ENCODE measurements at regions of chr15 and their contacts with region 1.

Region 1: DNA sequence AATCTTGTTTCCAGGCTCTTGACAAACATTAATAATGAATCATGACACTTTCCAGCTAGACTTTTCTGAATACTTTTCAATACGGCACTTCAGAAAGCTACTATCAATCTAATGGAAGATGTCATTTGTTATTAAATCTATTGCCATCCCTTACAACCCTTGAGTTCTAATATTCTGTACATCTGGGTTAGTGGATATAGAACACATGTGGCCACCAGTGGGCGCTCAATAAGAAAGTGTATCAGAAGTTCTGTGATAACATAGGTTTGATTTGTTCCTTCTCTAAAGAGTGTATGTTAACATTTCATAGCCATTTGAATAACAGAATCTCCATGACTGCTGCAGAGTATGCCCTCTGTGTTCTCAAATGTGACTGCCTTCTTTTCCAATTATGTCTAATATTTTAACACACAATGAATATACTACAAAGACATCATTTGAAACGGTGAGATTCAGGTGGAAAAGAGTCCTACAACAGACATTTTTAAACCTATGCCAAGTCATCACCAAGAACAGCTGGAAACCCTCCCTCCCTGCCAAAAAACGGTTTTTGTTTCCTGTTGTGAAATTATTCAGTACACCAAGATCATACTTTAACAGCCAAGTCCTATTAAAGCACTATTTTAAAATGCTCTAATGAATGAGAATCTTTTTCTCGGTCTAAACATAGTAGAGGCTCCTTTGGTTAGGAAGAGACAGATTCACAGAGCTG is 22.2 kb downstream of the ALDH1A2 start:
- DNase-seq: peak; percentile 74
- H3K4me3 Mint-ChIP-seq: no peak overlapping the region
- H3K27ac Mint-ChIP-seq: no peak overlapping the region
- H3K4me1 Mint-ChIP-seq: no peaks in the 10 kb centered on the region
- H3K27me3 Mint-ChIP-seq: peaks cover 30% of the 10 kb centered on the region

Region 2: DNA sequence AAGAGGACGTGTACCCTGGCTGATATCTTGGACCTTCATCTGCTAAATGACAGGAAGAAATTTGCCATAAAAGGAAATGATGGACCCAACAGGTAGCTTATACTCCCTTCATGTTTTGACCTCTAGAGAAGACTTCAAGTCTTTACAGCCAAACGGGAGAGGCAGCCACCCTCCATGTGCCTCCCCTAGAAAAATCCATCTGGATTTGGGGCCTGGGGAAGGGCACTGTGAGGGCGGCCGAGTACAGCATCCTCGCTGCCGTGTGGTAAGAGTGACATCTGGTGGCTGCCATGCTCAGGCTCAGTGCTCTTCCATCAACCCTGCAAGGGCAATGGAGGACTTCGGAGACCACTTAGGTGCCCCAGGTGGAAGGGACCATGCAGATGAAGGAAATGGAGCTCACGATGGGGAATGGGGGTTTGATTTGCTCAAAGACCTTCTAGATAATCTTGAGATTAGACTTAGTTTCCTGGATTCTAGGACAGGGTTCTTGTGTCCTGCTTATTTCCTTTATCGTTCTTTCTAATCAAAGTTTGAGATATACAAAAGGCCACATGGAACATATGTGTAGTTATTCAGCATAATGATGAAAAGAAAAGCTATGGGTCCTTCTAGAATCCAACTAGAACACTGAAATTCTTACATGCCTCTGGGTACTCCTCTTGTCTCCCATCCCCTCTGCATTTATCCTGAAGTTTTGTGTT is 139.3 kb after region 1 on chr15:
- intact Hi-C with region 1: loop called (anchors 1 kb)
- DNase-seq: peak; percentile 77
- H3K4me3 Mint-ChIP-seq: no peak overlapping the region
- H3K27ac Mint-ChIP-seq: no peak overlapping the region
- H3K4me1 Mint-ChIP-seq: peaks cover 12% of the 10 kb centered on the region
- H3K27me3 Mint-ChIP-seq: peaks cover 27% of the 10 kb centered on the region

Measured in activated CD4-positive, alpha-beta T cell treated with anti-CD3 and anti-CD28 coated beads, Interleukin-2, amount 10 ng/mL, durations not matched to agents 24 days and 14 days (primary cell).